Uterus (tissue), 4 donors: ENCODE measurements at regions of chr3 and their contacts with region 1.

Region 1: DNA sequence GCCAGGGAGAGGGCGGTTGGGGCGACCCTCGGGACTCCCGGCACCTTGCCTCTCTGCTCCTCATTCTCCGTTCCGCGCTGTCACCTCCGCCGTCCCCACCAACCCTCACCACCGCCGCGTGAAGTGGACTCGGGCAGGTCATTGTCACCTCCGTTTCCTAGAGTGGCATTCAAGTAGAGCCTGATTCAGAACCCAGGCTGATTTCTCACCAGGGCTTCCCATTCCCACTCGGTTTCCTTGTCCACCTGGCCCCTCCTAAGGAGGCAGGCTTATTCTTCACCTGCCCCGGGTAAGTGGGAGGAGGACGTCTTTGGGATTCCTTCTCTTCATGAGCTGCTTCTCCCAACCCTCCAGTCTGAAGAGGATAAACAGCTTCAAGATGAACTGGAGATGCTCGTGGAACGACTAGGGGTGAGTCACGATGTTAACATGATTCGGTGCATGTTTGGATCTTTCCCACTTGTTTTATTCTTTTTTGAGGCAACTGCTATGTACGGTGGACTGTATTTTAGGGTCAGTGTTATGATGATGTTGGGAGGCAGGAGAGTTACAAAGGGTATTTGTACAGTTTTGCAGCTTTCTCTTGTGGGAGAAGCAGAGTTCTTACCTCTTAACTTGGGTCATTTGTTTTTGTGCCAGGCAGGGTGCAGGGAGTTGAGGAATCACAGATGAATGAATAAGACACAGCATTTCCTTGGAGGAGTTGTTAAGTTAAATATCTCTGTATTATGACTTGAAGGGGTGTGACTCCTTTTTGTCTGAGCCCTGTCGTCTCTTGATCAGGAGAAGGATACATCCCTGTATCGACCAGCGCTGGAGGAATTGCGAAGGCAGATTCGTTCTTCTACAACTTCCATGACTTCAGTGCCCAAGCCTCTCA is 696 bp downstream of the PSMD2 start:
- DNase-seq: no peak
- H3K4me3 ChIP-seq: peak overlapping the region; percentile 82 to 94
- H3K27ac ChIP-seq: peak overlapping the region; percentile 83 to 90
- H3K4me1 ChIP-seq: peaks cover 0 to 5% of the 10 kb centered on the region in 2 donors
- H3K27me3 ChIP-seq: no peaks in the 10 kb centered on the region
- CTCF ChIP-seq: no peak
- POLR2A ChIP-seq: no peak

Region 2: DNA sequence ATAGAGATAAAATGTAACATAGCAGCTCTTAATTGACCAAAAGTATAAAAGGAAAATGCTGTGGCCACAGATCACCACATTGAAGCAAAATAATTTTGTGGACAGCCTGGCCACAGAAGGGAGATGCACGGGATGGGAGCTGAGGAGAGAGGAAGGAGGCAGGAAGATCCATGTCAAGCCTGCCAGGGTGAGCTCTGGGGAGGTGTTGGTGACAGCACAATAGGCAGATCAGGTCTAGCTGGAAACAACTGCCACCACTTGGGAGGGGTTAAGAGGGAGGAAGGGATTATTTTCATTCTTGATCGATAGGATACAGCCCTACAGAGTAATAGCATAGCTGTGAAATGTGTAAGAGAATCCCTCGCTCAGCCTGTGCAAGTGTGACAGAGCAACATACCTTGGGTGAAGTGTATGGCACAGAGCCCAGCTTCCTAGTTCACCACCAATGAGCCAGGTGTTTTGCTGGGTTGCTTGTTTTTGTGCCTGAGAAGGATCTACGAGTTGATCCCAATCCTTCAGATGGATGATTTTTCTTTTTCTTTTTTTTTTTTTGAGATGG is 1310.3 kb before region 1 on chr3:
- intact Hi-C with region 1: no loop called
- DNase-seq: no peak
- H3K4me3 ChIP-seq: no peak overlapping the region
- H3K27ac ChIP-seq: no peak overlapping the region
- H3K4me1 ChIP-seq: no peaks in the 10 kb centered on the region
- H3K27me3 ChIP-seq: no peaks in the 10 kb centered on the region
- CTCF ChIP-seq: no peak
- POLR2A ChIP-seq: no peak

Region 3: DNA sequence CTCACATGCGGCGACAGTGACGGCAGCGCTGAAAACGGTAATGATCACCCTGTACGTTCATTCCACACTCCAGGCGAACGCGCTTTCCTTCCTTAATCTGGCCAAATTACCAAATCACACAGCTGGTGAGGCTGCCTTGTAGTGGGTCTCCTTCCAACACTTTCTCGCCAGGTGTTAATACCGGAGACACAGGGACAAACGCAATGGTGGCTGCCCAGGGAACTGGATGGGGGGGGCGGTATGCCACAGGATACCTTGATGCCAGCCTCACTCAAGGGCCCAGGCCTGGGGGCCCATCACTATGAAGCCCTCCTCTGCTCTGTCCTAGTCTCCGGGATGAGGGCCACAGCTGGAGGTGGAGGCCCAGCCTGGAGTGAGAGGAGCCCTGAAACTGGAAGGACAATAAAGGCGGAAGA is 37.0 kb before region 1 on chr3:
- intact Hi-C with region 1: no loop called
- DNase-seq: no peak
- H3K4me3 ChIP-seq: no peak overlapping the region
- H3K27ac ChIP-seq: no peak overlapping the region
- H3K4me1 ChIP-seq: peaks cover 0 to 24% of the 10 kb centered on the region in 2 donors
- H3K27me3 ChIP-seq: peaks cover 27% of the 10 kb centered on the region in 2 donors
- CTCF ChIP-seq: no peak
- POLR2A ChIP-seq: no peak

Region 4: GRCh38 chr3:184354121-184354728 is 54.5 kb after region 1 on chr3:
- intact Hi-C with region 1: loop called (anchors 5 kb)
- DNase-seq: peak in 1 of 2 donors; percentile 47
- H3K4me3 ChIP-seq: no peak overlapping the region
- H3K27ac ChIP-seq: no peak overlapping the region
- H3K4me1 ChIP-seq: peaks cover 0 to 10% of the 10 kb centered on the region in 2 donors
- H3K27me3 ChIP-seq: no peaks in the 10 kb centered on the region
- CTCF ChIP-seq: peak; percentile 41 to 63 (median 48)
- POLR2A ChIP-seq: no peak

Region 5: DNA sequence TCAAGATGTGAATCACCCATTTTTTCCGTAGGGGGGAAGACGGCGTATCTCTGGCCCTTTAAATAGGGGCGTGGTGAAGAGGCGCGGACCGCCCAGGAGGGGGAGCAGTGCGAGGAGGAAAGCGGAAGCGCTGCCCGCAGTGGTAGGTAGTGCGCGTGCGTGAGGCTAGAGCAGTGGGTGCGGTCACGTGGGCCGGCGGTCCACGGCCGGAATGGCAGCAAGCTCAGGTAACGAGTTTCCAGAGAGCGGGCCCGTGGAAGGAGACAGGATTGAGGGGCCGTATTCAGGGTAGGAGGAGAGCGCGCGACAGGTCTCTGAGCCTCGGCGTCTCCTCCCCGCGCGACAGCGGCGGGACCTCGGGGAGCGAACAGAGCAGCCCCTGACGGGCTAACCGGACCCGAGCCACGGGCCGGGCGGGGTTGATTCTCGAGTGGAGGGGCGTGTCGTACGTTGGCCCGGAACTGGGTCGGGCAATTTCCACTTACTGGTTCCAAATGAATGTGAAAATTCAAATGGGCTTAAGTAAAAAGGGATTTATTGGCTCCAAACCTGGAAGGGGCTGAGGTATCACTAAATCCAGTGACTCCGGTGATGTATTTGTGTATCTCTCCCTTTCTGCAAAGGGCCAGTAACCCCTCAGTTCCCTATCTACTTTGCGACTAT is 512.4 kb after region 1 on chr3 and contains the start of gene VPS8:
- intact Hi-C with region 1: no loop called
- DNase-seq: peak; percentile 96
- H3K4me3 ChIP-seq: peak within 1 kb of the TSS; percentile 61 to 84
- H3K27ac ChIP-seq: peak within 1 kb of the TSS; percentile 50 to 75
- H3K4me1 ChIP-seq: peaks cover 0 to 3% of the 10 kb centered on the region in 2 donors
- H3K27me3 ChIP-seq: no peaks in the 10 kb centered on the region
- CTCF ChIP-seq: peak; percentile 64 to 81 (median 70)
- POLR2A ChIP-seq: peak; percentile 55 to 78
- total RNA-seq, gene VPS8: 76.5 to 281 (median 163) TPM